Head of caudate nucleus (tissue), 42 donors: ENCODE measurements at regions of chr17 and their contacts with region 1.

Region 1: DNA sequence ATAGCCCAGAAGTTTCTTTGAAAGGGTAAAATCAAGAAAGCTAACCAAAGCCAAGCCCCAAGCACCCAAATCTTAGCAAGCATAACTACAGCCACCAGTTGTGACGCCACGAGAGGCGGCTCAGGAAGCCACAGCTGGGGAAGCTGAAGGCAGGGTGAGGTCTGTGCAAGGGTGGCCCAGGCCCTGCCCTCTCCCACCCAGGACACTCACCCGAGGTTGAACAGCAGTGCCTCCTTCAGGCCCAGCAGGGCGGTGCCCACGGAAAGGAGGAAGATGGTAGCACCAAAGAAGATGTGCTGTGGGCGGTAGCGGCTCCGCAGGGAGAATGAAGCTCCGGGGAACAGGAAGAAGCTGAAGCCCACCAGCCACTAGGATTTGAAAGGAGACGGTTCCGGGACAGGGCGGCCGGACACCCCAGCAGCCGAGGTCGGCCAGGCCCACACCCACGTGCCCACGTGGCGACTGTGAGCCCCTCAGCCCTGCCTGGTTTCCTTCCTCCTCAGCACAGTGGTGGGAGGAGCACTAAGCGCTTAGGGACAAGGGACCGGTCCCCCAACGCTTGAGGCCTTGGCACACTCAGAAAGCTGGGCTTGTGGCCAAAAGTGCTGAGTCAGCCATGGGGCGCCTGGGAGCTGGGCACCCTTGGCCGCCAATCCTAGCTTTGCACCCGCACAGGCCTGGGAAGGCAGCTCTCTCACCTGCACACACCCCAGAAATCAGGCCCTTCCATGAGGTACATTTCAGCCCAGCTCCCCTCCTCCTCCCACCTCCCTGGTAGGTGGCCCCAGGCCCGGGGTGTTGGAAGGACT is 11.0 kb downstream of the CYB561 start:
- DNase-seq: peak; percentile 51 to 93 (median 78)

Region 2: DNA sequence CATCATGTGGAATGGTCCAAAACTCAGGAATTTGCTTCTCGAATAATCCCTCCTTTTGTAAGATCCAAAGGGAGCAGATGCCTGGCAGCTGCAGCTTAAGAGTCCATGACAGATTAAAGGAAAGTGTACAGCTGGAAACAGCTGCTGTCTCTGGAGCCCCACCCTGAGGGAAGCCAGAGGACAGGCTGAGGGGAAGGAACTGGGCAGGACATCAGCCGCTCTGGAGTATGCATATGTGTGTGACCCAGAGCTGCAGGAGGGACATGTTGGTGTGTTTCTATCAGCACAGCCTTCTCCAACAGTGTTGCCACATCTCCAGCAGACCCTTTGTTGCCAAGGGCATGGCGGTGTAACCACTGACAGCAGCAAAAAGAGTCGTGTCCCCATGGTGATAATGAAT is 35.2 kb before region 1 on chr17:
- intact Hi-C with region 1: no loop called
- DNase-seq: peak in 2 of 42 donors; percentile 28 to 29

Region 3: GRCh38 chr17:63609816-63610573 is 174.9 kb after region 1 on chr17:
- intact Hi-C with region 1: loop called (anchors 5 kb)
- DNase-seq: no peak